CD8-positive, alpha-beta memory T cell (primary cell): ENCODE measurements at regions of chr10 and their contacts with region 1.

Region 1: GRCh38 chr10:22436884-22437619 is 91.8 kb downstream of the SPAG6 start:
- DNase-seq: peak; percentile 79 to 94 (median 91)
- H3K4me3 ChIP-seq: peak overlapping the region; percentile 78
- H3K4me3 Mint-ChIP-seq: peak overlapping the region; percentile 91 to 99 (median 96)
- H3K27ac ChIP-seq: peak overlapping the region; percentile 90
- H3K27ac Mint-ChIP-seq: peak overlapping the region; percentile 95 to 100 (median 98)
- H3K4me1 ChIP-seq: peaks cover 20% of the 10 kb centered on the region
- H3K4me1 Mint-ChIP-seq: peaks cover 34 to 43% (median 40%) of the 10 kb centered on the region in 3 donors
- H3K27me3 ChIP-seq: no peaks in the 10 kb centered on the region
- H3K27me3 Mint-ChIP-seq: peaks cover 3 to 4% of the 10 kb centered on the region in 2 donors

Region 2: DNA sequence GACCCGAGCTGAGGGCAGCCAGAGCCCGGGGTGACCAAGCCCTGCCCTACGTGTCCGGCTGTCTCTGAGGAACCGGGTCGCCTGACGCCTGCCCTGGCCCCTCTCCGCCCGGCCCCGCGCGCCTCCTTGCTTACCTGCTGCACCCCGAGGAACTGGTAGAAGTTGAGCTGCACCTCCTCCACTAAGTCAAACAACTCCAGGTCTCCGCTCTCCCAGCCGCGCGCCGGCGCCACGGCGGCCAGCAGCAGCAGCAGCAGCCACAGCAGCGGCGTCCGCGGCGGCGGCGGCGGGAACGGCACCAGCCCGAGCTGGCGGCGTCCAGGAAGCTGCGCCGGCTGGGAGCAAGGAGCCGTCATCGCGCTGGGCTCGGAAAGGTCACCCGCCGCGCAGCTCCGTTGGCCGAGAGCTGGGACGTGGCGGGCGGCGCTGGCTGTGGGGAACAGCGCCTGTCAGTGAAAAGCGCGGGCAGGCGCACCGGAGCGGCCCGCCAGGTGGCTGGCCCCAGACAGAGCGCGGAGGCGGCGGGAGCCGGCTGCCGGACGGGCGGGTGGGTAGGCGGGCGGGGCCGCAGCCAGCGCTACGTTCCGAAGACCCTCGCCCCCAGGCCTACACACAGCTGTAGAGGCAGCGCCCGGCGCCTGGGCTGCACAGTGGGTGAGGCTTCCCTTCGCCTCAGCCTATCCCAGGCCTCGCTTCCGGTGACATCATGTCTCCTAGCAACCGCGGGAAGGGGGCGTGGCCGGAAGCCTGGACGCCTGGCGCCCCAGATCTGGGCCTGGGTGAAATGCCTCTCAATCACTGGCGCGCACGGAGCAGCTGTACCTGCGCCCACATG is 433.8 kb before region 1 on chr10 and contains the start of gene DNAJC1:
- CTCF ChIA-PET with region 1: interaction called, 17 read pairs
- POLR2A ChIA-PET with region 1: interaction called, 23 read pairs
- DNase-seq: peak; percentile 96 to 99 (median 97)
- H3K4me3 ChIP-seq: peak within 1 kb of the TSS; percentile 72
- H3K4me3 Mint-ChIP-seq: peak within 1 kb of the TSS; percentile 92 to 99 (median 95)
- H3K27ac ChIP-seq: peak within 1 kb of the TSS; percentile 93
- H3K27ac Mint-ChIP-seq: peak within 1 kb of the TSS; percentile 92 to 98 (median 97)
- H3K4me1 ChIP-seq: peaks cover 30% of the 10 kb centered on the region
- H3K4me1 Mint-ChIP-seq: peaks cover 40 to 49% (median 48%) of the 10 kb centered on the region in 3 donors
- H3K27me3 ChIP-seq: no peaks in the 10 kb centered on the region
- H3K27me3 Mint-ChIP-seq: peaks cover 3 to 17% of the 10 kb centered on the region in 2 donors
- total RNA-seq, gene DNAJC1: 30.8 to 31.8 TPM

Region 3: DNA sequence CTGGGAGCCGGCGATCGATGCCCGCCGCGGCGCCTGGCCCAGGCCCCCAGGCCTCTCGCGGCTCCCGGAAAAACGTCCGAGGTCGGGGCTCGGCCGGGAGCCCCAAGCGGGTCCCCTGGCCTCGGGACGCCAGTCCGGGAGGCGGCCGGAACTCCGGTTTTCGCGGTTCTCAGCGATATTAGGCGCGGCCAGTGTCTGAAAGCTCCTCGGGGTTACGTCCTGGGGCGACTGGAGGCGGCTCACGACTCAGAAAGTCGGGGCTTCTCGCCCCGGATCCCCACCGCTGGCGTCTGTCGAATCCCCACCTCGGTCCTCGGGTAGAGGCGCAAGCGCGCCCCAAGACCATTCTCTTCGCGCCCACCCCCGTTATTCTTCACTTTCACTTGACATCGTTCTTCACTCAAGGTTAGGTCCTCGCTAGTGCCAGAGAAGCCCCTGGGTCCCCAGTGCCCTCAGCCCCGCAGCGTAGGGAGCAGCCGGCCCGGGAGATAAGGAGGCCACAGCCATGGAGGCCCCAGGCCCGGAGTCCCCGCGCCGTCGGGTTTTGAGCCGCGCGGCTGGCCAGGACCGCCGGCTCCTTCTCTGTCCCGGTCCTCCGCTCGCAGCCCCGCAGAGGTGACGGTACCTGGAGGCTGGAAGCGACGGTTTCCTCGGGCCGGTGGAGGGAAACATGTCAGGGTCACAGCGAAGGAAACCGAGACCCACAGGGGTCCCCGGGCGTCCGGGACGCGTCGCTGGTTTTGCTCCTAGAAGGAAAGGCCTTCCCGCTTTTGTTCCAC is 184.1 kb before region 1 on chr10:
- CTCF ChIA-PET with region 1: interaction called, 8 read pairs
- POLR2A ChIA-PET with region 1: interaction called, 17 read pairs
- DNase-seq: peak; percentile 5 to 59 (median 36)
- H3K4me3 ChIP-seq: peak overlapping the region; percentile 66
- H3K4me3 Mint-ChIP-seq: peak overlapping the region; percentile 89 to 98 (median 93)
- H3K27ac ChIP-seq: peak overlapping the region; percentile 82
- H3K27ac Mint-ChIP-seq: peak overlapping the region; percentile 92 to 100 (median 96)
- H3K4me1 ChIP-seq: no peaks in the 10 kb centered on the region
- H3K4me1 Mint-ChIP-seq: peaks cover 17 to 52% (median 21%) of the 10 kb centered on the region in 3 donors
- H3K27me3 ChIP-seq: no peaks in the 10 kb centered on the region
- H3K27me3 Mint-ChIP-seq: peaks cover 7 to 30% of the 10 kb centered on the region in 2 donors

Region 4: GRCh38 chr10:22340362-22341189 is 96.5 kb before region 1 on chr10:
- CTCF ChIA-PET with region 1: interaction called, 9 read pairs
- POLR2A ChIA-PET with region 1: interaction called, 12 read pairs
- DNase-seq: peak; percentile 38 to 79 (median 65)
- H3K4me3 ChIP-seq: peak overlapping the region; percentile 46
- H3K4me3 Mint-ChIP-seq: peak overlapping the region; percentile 85 to 98 (median 89)
- H3K27ac ChIP-seq: peak overlapping the region; percentile 66
- H3K27ac Mint-ChIP-seq: peak overlapping the region in 7 of 8 donors; percentile 79 to 95 (median 88)
- H3K4me1 ChIP-seq: peaks cover 33% of the 10 kb centered on the region
- H3K4me1 Mint-ChIP-seq: peaks cover 15 to 33% (median 30%) of the 10 kb centered on the region in 3 donors
- H3K27me3 ChIP-seq: peaks cover 94% of the 10 kb centered on the region
- H3K27me3 Mint-ChIP-seq: peaks cover 77 to 80% of the 10 kb centered on the region in 2 donors

Region 5: GRCh38 chr10:22461891-22462290 is 24.8 kb after region 1 on chr10:
- CTCF ChIA-PET with region 1: no interaction called
- POLR2A ChIA-PET with region 1: no interaction called
- DNase-seq: no peak
- H3K4me3 ChIP-seq: no peak overlapping the region
- H3K4me3 Mint-ChIP-seq: no peak overlapping the region
- H3K27ac ChIP-seq: no peak overlapping the region
- H3K27ac Mint-ChIP-seq: no peak overlapping the region
- H3K4me1 ChIP-seq: no peaks in the 10 kb centered on the region
- H3K4me1 Mint-ChIP-seq: no peaks in the 10 kb centered on the region
- H3K27me3 ChIP-seq: no peaks in the 10 kb centered on the region
- H3K27me3 Mint-ChIP-seq: peaks cover 5 to 6% of the 10 kb centered on the region in 2 donors